A673 (cell line): ENCODE measurements at regions of chr2 and their contacts with region 1.

Region 1: DNA sequence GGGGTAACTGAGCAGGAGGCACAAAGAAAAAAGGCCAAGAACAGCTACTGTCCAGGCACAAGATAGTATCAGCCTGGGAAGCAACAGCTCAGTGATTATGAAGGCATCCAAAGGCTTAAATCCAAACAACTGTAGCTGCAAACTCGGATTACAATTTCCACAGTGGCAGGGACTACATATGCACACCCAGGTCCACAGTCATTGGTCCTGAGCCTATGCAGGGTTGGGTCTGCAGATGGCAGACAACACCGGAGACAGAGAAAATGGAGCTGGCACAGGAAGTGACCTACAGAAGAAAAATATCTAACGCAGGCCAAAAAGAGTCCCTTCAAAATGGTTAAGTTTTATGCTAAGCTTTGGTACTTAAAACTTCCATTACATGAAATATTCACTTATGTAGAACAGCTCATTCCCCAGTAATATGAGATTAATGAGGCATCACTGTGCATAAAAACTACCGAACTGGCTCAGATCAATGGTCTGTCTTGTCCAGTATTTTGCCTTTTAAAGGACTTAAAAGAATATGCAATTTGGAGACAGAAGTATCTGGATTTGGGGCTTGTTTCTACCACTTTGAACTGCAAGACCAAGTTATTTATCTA is 132.1 kb downstream of the SUCLG1 start:
- DNase-seq: no peak
- H3K4me3 ChIP-seq: no peak overlapping the region
- H3K27ac ChIP-seq: no peak overlapping the region
- H3K4me1 ChIP-seq: no peaks in the 10 kb centered on the region
- H3K27me3 ChIP-seq: peaks cover 29% of the 10 kb centered on the region
- CTCF ChIP-seq: no peak

Region 2: DNA sequence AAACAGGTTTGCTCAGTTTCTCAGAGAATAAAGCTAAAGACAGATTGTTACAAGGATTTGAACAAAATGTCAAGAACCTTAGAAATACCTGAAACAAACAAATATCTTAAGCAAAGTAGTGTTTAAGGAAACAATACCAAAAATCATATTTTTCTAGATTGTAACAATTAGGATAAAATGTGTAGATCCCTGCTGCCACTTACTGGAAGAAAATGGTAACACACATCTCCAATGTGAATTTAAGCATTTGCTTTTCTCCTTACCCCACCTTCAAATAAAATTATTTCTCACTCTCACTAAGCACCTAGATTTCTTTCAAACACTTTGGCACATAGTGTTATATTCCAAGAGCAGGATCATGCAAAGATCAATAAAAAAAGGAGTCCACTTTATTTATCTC is 97.2 kb after region 1 on chr2:
- CTCF ChIA-PET with region 1: no interaction called
- POLR2A ChIA-PET with region 1: no interaction called
- intact Hi-C with region 1: loop called (anchors 5 kb)
- DNase-seq: peak; percentile 20
- H3K4me3 ChIP-seq: no peak overlapping the region
- H3K27ac ChIP-seq: no peak overlapping the region
- H3K4me1 ChIP-seq: no peaks in the 10 kb centered on the region
- H3K27me3 ChIP-seq: no peaks in the 10 kb centered on the region
- CTCF ChIP-seq: peak; percentile 62